Calu3 (cell line): ENCODE measurements at regions of chr1 and their contacts with region 1.

Region 1: DNA sequence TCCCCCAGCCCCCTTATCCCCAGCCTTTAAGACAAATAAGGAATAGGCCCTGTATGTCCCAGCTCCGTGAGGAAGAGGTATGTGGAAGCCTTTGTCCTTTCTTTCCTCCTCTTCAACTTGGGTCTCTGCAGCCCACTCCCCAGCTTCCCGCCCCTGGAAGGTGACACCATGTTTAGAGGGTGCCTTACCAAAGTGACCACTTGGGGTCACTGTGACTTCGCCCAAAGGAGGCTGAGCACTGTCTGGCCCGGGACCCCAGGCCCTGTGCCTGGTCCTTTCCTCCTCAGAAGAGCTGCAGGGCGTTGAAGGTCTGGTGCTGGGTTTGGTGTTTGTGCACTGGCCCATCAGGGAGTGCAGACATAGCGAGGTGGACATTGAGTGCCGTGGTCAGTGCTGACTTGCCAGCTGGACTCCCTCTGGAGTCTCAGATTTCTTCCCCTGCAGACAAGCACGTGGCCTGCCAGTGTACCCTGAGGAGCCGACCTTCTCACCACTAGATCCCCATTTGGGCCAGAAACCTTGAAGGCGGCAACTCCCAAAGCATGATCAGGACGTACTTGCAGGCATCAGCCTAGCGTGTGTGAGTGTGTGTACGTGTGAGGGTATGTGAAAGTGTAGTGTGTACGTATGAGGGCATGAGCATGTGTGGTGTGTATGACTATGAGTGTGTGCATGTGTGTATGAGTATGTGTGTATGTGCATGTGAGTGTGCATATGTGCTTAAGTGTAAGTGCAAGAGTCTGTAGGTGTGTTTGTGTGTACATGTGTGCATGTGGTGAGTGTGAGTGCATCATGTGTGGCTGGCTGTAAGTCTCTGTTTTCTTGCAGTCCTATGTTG is 181.4 kb upstream of the KIAA0040 start:
- DNase-seq: peak; percentile 56
- H3K4me3 Mint-ChIP-seq: no peak overlapping the region
- H3K27ac Mint-ChIP-seq: no peak overlapping the region
- H3K4me1 Mint-ChIP-seq: no peaks in the 10 kb centered on the region
- H3K27me3 Mint-ChIP-seq: peaks cover 98% of the 10 kb centered on the region
- CTCF ChIP-seq: peak; percentile 65

Region 2: DNA sequence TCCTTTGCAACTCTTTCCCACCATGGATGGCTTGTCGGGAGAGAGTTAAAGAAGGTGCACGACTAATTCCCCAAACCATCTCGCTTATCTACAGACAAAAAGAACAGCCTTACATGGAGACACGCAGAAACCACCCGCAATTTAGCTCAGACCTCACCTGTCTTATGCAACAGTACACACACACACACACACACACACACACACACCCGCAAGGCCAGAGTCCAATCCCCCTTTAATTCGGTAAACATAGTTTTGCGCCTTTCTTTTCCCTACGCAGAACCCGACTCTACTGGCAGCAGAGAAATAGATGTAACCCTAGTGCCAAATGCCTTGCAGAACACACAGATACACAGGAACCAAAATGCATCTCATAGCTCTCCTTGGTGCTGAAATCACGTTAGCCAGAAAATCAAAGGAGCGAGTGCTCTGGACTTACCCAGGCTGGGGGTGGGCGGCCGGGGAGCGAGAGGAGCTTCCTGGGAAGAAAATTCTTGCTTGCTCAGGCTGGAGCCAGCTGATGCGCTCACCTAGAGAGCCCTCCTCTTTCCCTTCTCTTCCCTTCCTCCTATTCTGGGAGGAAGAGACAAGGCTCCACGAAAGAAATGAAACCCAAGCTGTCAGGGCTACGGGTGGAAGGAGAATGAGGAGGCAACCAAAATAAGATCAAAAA is 368.9 kb after region 1 on chr1:
- CTCF ChIA-PET with region 1: no interaction called
- intact Hi-C with region 1: loop called (anchors 5 kb)
- DNase-seq: no peak
- H3K4me3 Mint-ChIP-seq: no peak overlapping the region
- H3K27ac Mint-ChIP-seq: no peak overlapping the region
- H3K4me1 Mint-ChIP-seq: no peaks in the 10 kb centered on the region
- H3K27me3 Mint-ChIP-seq: peaks cover 57% of the 10 kb centered on the region
- CTCF ChIP-seq: no peak

Region 3: GRCh38 chr1:175887981-175888433 is 514.0 kb after region 1 on chr1:
- CTCF ChIA-PET with region 1: no interaction called
- intact Hi-C with region 1: loop called (anchors 10 kb)
- DNase-seq: peak; percentile 62
- H3K4me3 Mint-ChIP-seq: no peak overlapping the region
- H3K27ac Mint-ChIP-seq: no peak overlapping the region
- H3K4me1 Mint-ChIP-seq: no peaks in the 10 kb centered on the region
- H3K27me3 Mint-ChIP-seq: no peaks in the 10 kb centered on the region
- CTCF ChIP-seq: peak; percentile 69

Region 4: DNA sequence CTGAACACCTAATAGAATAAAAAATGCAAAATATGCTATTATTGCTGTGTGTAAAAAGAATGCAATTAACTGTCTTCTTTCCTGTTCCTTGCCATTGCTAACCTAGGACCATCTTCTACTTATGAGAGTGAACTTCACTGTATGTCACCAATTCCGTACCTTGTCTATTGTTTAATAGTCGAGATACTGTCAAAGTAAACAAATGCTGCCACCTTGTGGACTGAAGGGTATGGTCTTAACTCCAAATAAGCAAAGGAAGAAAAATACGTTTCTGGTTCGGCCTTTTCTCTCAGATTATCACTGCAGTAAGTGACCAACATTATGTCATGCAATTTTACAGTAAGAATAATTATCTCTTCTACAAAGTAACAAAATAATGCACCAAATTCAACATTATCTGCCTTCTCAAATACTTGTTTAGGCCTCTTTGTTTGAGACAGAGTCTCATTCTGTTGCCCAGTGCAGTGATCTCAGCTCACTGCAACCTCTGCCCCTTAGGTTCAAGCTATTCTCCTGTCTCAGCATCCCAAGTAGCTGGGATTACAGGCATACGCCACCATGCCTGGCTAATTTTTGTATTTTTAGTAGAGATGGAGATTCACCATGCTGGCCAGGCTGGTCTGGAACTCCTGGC is 699.6 kb after region 1 on chr1:
- CTCF ChIA-PET with region 1: no interaction called
- intact Hi-C with region 1: loop called (anchors 1 kb)
- DNase-seq: peak; percentile 53
- H3K4me3 Mint-ChIP-seq: no peak overlapping the region
- H3K27ac Mint-ChIP-seq: no peak overlapping the region
- H3K4me1 Mint-ChIP-seq: no peaks in the 10 kb centered on the region
- H3K27me3 Mint-ChIP-seq: no peaks in the 10 kb centered on the region
- CTCF ChIP-seq: peak; percentile 63